OCI-LY7 (cell line): ENCODE measurements at regions of chr15 and their contacts with region 1.

Region 1: DNA sequence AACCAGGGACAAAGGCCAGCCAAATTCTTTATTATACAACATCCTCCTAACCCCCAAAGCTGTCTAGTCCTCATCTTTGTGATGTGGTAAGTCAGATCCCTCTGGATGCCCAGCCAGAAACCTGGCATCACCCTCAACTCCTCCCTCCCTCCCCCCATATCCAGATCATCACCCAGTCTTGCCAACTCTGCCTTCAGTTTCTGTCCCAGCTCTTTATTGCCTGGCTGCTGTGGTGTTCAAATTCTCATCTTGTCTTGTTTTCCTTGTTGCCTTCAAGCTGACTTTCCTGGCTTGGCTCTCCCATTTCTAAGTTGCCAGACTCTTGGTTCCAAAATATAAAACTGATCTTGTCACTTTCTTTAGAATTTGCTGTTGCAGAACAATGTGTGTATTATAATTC is 28.6 kb downstream of the MAP2K1 start:
- DNase-seq: no peak
- H3K4me3 ChIP-seq: no peak overlapping the region
- H3K27ac ChIP-seq: no peak overlapping the region
- H3K4me1 ChIP-seq: peaks cover 16% of the 10 kb centered on the region
- CTCF ChIP-seq: no peak

Region 2: DNA sequence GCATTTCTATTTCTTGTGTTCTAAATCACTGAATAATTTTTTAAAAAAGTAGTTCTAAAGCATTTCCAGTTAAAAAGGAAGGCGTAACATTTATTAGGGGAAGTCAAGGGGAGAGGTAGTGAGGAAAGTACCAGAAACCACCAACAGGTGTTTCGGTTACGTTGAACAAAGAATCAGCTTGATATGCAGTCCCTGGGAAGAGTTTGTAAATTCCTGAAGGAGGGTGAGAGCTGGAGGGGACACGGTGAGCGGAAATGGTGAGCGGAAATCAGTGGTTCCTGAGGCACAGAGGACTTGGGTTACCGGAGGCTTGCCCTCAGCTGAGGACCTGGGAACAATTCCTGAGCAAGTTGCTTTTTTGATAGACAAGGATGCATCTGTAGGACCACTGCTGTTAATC is 10.8 kb before region 1 on chr15:
- CTCF ChIA-PET with region 1: no interaction called
- POLR2A ChIA-PET with region 1: interaction called, 18 read pairs
- intact Hi-C with region 1: no loop called
- DNase-seq: no peak
- H3K4me3 ChIP-seq: no peak overlapping the region
- H3K27ac ChIP-seq: no peak overlapping the region
- H3K4me1 ChIP-seq: peaks cover 56% of the 10 kb centered on the region
- CTCF ChIP-seq: no peak

Region 3: GRCh38 chr15:66483131-66483566 is 67.8 kb after region 1 on chr15:
- CTCF ChIA-PET with region 1: no interaction called
- POLR2A ChIA-PET with region 1: no interaction called
- intact Hi-C with region 1: no loop called
- DNase-seq: no peak
- H3K4me3 ChIP-seq: no peak overlapping the region
- H3K27ac ChIP-seq: no peak overlapping the region
- H3K4me1 ChIP-seq: no peaks in the 10 kb centered on the region
- CTCF ChIP-seq: no peak